Mammary epithelial cell (primary cell): ENCODE measurements at regions of chr10 and their contacts with region 1.

Region 1: GRCh38 chr10:13560597-13560996 is 26.2 kb upstream of the PRPF18 start:
- DNase-seq: peak; percentile 1
- H3K4me3 ChIP-seq: no peak overlapping the region
- H3K27ac ChIP-seq: no peak overlapping the region
- H3K4me1 ChIP-seq: no peaks in the 10 kb centered on the region
- H3K27me3 ChIP-seq: no peaks in the 10 kb centered on the region
- CTCF ChIP-seq: no peak

Region 2: DNA sequence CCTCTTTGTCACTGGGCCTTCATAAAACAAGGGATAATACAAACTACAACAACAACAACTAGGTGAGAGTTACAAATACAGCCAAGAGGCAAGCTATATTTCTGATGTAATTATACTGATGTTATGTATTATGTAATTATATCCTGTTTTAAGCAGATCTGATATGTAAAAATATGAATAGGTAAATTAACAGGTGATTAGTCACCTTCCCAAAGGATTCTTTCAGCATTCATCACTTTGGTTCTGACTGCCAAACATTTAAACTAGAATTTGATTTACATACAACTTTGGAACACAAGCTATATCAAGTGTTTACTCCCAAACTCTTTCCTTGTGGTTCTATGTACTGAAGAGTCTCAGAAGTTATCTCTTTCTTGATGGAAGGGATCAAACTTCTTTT is 85.5 kb before region 1 on chr10:
- CTCF ChIA-PET with region 1: no interaction called
- dilution Hi-C with region 1: loop called (anchors 5 kb)
- in situ Hi-C with region 1: no loop called
- intact Hi-C with region 1: no loop called
- DNase-seq: peak; percentile 49
- H3K4me3 ChIP-seq: no peak overlapping the region
- H3K27ac ChIP-seq: no peak overlapping the region
- H3K4me1 ChIP-seq: peaks cover 10% of the 10 kb centered on the region
- H3K27me3 ChIP-seq: no peaks in the 10 kb centered on the region
- CTCF ChIP-seq: no peak

Region 3: GRCh38 chr10:13831711-13832141 is 271.1 kb after region 1 on chr10:
- CTCF ChIA-PET with region 1: no interaction called
- dilution Hi-C with region 1: no loop called
- in situ Hi-C with region 1: no loop called
- intact Hi-C with region 1: no loop called
- DNase-seq: no peak
- H3K4me3 ChIP-seq: no peak overlapping the region
- H3K27ac ChIP-seq: no peak overlapping the region
- H3K4me1 ChIP-seq: no peaks in the 10 kb centered on the region
- H3K27me3 ChIP-seq: no peaks in the 10 kb centered on the region
- CTCF ChIP-seq: no peak